Activated B cell treated with CpG ODN at 0.5 μM for 24 hours (primary cell): ENCODE measurements at regions of chr16 and their contacts with region 1.

Region 1: DNA sequence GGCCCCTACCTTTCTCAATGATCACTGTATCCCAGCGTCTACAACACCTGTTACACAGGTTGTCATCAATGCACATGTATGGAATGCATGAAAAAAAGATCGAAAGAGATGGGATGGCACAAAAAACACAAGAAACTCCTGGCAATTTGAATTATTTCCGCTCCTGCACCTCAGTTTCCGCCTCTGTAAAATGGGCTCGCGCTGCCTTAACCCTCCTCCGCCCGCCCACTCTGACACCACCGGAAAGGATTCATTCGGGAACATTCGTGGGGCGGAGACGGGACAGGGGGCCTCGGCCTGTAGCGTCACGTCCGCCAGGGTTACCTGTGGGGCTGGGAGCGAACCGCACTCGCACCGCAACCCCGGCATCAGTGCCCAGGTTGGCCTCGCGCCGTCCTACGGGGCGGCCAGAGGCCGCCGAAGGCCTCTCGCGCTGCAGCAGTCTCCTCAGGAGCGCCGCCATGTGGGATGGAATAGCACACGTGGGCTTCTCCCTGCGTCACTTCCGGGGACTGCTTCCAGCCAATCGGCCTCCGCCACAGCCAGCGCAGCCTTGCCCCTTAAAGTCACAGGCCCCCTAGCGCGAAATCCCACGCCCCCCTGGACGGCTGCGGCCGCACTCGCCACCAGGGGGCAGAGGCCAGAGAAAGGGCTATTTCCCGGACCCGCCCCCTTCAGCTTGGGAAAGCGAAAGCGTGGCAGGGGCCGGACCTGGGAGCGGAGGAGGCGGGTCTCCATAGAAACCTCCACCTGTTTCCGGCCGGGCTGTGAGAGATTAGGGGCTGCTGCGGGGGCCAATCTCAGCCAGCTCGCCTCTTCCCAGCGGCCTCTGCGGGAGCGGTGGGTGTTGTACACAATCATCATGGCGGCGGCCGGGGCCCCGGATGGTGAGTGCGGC is at the starts of genes EARS2 and UBFD1:
- DNase-seq: peak; percentile 98
- ATAC-seq: peak; percentile 89
- H3K4me3 Mint-ChIP-seq: peak within 1 kb of the TSS; percentile 93
- H3K27ac Mint-ChIP-seq: peak within 1 kb of the TSS; percentile 89
- H3K4me1 Mint-ChIP-seq: peaks cover 30% of the 10 kb centered on the region
- H3K27me3 Mint-ChIP-seq: no peaks in the 10 kb centered on the region
- CTCF ChIP-seq: no peak
- total RNA-seq, gene EARS2: 24.9 and 27.5 TPM in 2 replicates
- total RNA-seq, gene UBFD1: 47.9 and 52.2 TPM in 2 replicates

Region 2: GRCh38 chr16:23182460-23183309 is 374.4 kb before region 1 on chr16 and contains the start of gene SCNN1G:
- CTCF ChIA-PET with region 1: no interaction called
- POLR2A ChIA-PET with region 1: no interaction called
- intact Hi-C with region 1: loop called (anchors 2 kb)
- DNase-seq: peak; percentile 71
- ATAC-seq: peak; percentile 96
- H3K4me3 Mint-ChIP-seq: peak within 1 kb of the TSS; percentile 72
- H3K27ac Mint-ChIP-seq: no peak within 1 kb of the TSS
- H3K4me1 Mint-ChIP-seq: peaks cover 15% of the 10 kb centered on the region
- H3K27me3 Mint-ChIP-seq: peaks cover 34% of the 10 kb centered on the region
- CTCF ChIP-seq: peak; percentile 30
- total RNA-seq, gene SCNN1G: not detected in 2 replicates

Region 3: GRCh38 chr16:23504451-23505179 is 52.5 kb before region 1 on chr16:
- CTCF ChIA-PET with region 1: interaction called, 13 read pairs
- POLR2A ChIA-PET with region 1: interaction called, 14 read pairs
- intact Hi-C with region 1: loop called (anchors 1 kb)
- DNase-seq: peak; percentile 42
- ATAC-seq: peak; percentile 63
- H3K4me3 Mint-ChIP-seq: peak overlapping the region; percentile 90
- H3K27ac Mint-ChIP-seq: peak overlapping the region; percentile 95
- H3K4me1 Mint-ChIP-seq: peaks cover 97% of the 10 kb centered on the region
- H3K27me3 Mint-ChIP-seq: no peaks in the 10 kb centered on the region
- CTCF ChIP-seq: no peak

Region 4: GRCh38 chr16:23518435-23518891 is 38.7 kb before region 1 on chr16:
- CTCF ChIA-PET with region 1: interaction called, 3 read pairs
- POLR2A ChIA-PET with region 1: interaction called, 15 read pairs
- intact Hi-C with region 1: loop called (anchors 1 kb)
- DNase-seq: no peak
- ATAC-seq: peak; percentile 59
- H3K4me3 Mint-ChIP-seq: peak overlapping the region; percentile 64
- H3K27ac Mint-ChIP-seq: peak overlapping the region; percentile 86
- H3K4me1 Mint-ChIP-seq: peaks cover 68% of the 10 kb centered on the region
- H3K27me3 Mint-ChIP-seq: no peaks in the 10 kb centered on the region
- CTCF ChIP-seq: no peak

Region 5: DNA sequence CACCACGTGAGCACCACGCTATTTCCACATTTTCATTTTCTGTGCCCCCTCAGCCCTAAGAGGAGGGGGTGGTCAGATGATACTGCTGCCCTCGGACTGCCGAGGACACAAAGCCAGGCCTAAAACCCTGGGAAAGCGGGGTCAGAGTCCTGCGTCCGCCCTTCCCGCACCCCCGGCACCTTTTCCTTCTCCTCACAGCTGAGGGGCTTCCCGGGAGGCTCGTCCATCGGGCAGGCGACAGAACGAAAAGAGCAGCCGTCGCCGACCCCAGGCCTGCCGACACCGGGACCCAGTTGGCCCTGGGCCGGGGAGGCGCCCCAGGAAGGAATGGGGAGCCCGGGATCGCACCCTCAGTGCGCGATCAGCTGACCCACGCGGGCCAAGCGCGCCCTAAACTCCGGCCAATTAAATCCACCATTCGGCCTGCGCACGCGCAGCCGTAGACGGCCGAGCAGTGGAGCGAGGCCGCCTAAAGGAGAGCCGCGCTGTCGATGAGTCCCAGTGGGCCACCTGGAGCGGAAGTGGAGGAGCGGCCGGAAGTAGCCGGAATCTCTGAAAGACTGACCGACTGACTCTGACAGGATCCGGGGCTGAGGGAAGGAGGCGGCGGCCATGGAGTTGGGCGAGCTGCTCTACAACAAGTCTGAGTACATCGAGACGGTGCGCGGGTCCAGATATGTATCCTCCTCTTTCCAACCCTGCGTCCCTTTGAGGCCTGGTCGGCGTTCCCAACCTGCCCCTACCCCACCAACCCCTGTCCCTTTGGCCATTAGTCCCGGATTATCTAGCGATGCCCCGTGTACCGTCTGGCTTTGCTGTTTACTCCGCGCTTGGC is 84.0 kb after region 1 on chr16 and contains the starts of genes DCTN5 and PALB2:
- CTCF ChIA-PET with region 1: no interaction called
- POLR2A ChIA-PET with region 1: no interaction called
- intact Hi-C with region 1: loop called (anchors 1 kb)
- DNase-seq: peak; percentile 81
- ATAC-seq: peak; percentile 94
- H3K4me3 Mint-ChIP-seq: peak within 1 kb of the TSS; percentile 98
- H3K27ac Mint-ChIP-seq: peak within 1 kb of the TSS; percentile 97
- H3K4me1 Mint-ChIP-seq: peaks cover 37% of the 10 kb centered on the region
- H3K27me3 Mint-ChIP-seq: no peaks in the 10 kb centered on the region
- CTCF ChIP-seq: no peak
- total RNA-seq, gene DCTN5: 62.8 and 64.1 TPM in 2 replicates
- total RNA-seq, gene PALB2: 16.0 and 19.8 TPM in 2 replicates

Region 6: GRCh38 chr16:23712976-23713375 is 155.8 kb after region 1 on chr16 and contains the start of gene ERN2:
- CTCF ChIA-PET with region 1: no interaction called
- POLR2A ChIA-PET with region 1: no interaction called
- intact Hi-C with region 1: no loop called
- DNase-seq: no peak
- ATAC-seq: no peak
- H3K4me3 Mint-ChIP-seq: no peak within 1 kb of the TSS
- H3K27ac Mint-ChIP-seq: no peak within 1 kb of the TSS
- H3K4me1 Mint-ChIP-seq: no peaks in the 10 kb centered on the region
- H3K27me3 Mint-ChIP-seq: peaks cover 49% of the 10 kb centered on the region
- CTCF ChIP-seq: no peak
- total RNA-seq, gene ERN2: not detected in 2 replicates